Aorta (tissue), 5 donors: ENCODE measurements at regions of chr10 and their contacts with region 1.

Region 1: GRCh38 chr10:80163741-80164341 is 31.3 kb downstream of the PLAC9 start:
- DNase-seq: peak; percentile 61 to 77
- ATAC-seq: no peak
- H3K4me3 ChIP-seq: no peak overlapping the region
- H3K27ac ChIP-seq: no peak overlapping the region
- H3K4me1 ChIP-seq: peaks cover 7 to 9% of the 10 kb centered on the region in 2 donors
- H3K27me3 ChIP-seq: no peaks in the 10 kb centered on the region

Region 2: GRCh38 chr10:80196270-80196949 is 32.6 kb after region 1 on chr10:
- intact Hi-C with region 1: loop called in 1 of 2 experiments (anchors 2 kb)
- DNase-seq: peak in 1 of 2 donors; percentile 63
- ATAC-seq: no peak
- H3K4me3 ChIP-seq: no peak overlapping the region
- H3K27ac ChIP-seq: peak overlapping the region; percentile 1 to 37
- H3K4me1 ChIP-seq: peaks cover 0 to 8% of the 10 kb centered on the region in 2 donors
- H3K27me3 ChIP-seq: no peaks in the 10 kb centered on the region